Lower leg skin (tissue), 4 donors: ENCODE measurements at regions of chr4 and their contacts with region 1.

Region 1: DNA sequence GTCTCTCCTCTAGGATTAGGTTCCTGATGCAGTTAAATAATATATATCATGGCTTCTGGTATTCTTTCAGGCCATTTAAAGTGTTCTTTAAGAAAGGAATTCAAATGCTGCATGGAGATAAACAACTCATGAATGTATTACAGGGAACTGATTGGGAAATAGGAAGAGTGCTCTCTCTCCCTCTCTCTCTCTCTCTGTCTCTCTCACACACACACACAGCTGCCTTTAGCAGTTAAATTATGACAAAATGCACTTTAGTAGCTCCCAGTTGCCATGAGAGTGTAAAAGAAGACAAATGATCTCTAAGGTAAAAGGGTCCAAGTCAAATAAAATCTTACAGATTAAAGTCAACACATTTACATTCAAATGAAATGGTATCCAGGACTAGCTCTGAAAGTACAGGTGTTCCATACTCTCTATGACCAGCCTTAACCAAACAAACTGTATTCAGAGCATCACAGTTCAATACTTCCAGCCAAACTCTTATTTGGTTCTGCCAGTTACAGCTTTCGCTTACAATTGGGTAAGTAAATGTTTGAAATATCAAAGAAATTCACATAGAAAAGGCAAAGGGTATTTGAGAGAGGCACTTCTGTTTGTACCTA is 94.7 kb upstream of the CXXC4 start:
- DNase-seq: no peak
- H3K4me3 ChIP-seq: no peak overlapping the region
- CTCF ChIP-seq: no peak
- POLR2A ChIP-seq: no peak

Region 2: DNA sequence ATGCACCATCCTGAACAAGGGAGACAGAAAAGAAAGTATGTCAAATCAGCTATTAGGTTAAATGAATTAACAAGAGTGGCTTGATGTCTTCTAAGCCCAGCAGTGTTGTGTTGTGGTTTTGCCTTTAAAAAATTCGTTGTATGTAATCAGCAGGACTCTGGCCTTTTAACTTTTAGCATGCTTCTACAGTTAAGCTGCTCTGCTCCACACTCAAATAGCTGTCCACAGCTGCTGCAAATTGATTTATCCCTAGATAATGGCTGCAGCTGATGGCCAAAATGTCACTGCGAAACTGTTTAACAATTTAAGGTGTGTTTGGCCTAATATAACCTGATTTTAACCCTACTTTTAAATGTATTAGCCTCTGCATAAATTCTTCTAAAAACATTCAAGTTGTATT is 180.5 kb before region 1 on chr4:
- intact Hi-C with region 1: loop called (anchors 5 kb)
- DNase-seq: no peak
- H3K4me3 ChIP-seq: no peak overlapping the region
- CTCF ChIP-seq: no peak
- POLR2A ChIP-seq: no peak